Dendritic cell treated with granulocyte-macrophage colony-stimulating factor and Interleukin-4, amounts not matched to agents 40 ng/mL and 50 ng/mL, for 4 days (primary cell): ENCODE measurements at regions of chr4 and their contacts with region 1.

Region 1: GRCh38 chr4:42282081-42282901 is 115.0 kb upstream of the SHISA3 start:
- H3K4me3 Mint-ChIP-seq: no peak overlapping the region
- H3K27ac Mint-ChIP-seq: no peak overlapping the region
- H3K4me1 Mint-ChIP-seq: peaks cover 10% of the 10 kb centered on the region
- H3K27me3 Mint-ChIP-seq: peaks cover 4% of the 10 kb centered on the region

Region 2: DNA sequence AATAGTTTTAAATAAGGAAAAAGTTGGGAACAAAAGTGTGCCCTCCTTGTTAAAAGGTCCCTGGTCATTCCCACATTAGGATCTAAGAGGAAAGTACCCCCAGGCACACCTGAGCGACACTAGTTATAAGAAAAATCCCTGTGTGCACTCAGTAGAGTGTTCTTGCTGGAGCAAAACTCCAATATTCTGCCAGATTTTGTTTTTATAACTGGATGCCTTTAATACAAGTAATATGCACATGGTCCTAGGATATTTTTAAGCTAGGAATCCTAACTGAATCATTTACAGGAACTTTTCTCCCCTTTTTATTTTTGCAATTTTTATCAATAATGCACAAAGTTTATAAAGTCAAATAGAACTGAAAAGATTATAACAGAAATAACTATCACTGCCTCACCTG is 198.5 kb before region 1 on chr4:
- intact Hi-C with region 1: no loop called
- H3K4me3 Mint-ChIP-seq: no peak overlapping the region
- H3K27ac Mint-ChIP-seq: no peak overlapping the region
- H3K4me1 Mint-ChIP-seq: peaks cover 5% of the 10 kb centered on the region
- H3K27me3 Mint-ChIP-seq: no peaks in the 10 kb centered on the region

Region 3: GRCh38 chr4:42460043-42460442 is 177.8 kb after region 1 on chr4:
- intact Hi-C with region 1: no loop called
- H3K4me3 Mint-ChIP-seq: no peak overlapping the region
- H3K27ac Mint-ChIP-seq: no peak overlapping the region
- H3K4me1 Mint-ChIP-seq: no peaks in the 10 kb centered on the region
- H3K27me3 Mint-ChIP-seq: no peaks in the 10 kb centered on the region

Region 4: DNA sequence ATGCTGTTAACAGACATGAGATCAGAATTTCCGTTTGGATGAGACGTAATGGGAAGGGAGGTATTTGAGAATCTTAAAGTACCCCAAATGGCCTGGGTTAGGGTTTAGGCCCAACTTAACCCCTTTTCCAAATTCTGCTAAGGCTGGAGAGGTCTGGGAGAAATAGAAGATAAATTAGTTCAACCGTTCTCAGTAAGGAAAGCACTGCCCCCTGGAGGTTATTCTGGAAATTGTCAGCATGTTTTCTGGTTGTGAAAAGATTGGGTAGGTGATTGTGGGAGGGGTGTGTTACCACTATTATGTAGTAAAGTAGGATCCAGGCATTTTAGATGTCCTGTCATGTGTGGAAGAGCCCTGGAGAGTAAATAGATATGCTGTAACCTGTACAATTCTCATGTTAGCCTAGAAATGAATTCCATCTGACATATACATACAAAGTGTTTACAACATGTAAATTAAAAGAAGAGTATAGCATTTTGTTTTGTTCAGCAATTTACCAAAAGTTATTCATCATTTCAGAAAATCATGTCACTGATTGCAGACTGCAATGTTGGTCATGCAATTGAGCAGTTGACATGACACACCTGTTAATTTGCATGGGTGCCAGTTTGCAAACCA is 583.4 kb after region 1 on chr4:
- intact Hi-C with region 1: loop called (anchors 5 kb)
- H3K4me3 Mint-ChIP-seq: no peak overlapping the region
- H3K27ac Mint-ChIP-seq: no peak overlapping the region
- H3K4me1 Mint-ChIP-seq: no peaks in the 10 kb centered on the region
- H3K27me3 Mint-ChIP-seq: no peaks in the 10 kb centered on the region